Dendritic cell treated with granulocyte-macrophage colony-stimulating factor and Interleukin-4, amounts not matched to agents 40 ng/mL and 50 ng/mL, for 4 days (primary cell): ENCODE measurements at regions of chr13 and their contacts with region 1.

Region 1: GRCh38 chr13:37148501-37148900 is 43.0 kb upstream of the CSNK1A1L start:
- H3K4me3 Mint-ChIP-seq: no peak overlapping the region
- H3K27ac Mint-ChIP-seq: no peak overlapping the region
- H3K4me1 Mint-ChIP-seq: no peaks in the 10 kb centered on the region
- H3K27me3 Mint-ChIP-seq: no peaks in the 10 kb centered on the region

Region 2: DNA sequence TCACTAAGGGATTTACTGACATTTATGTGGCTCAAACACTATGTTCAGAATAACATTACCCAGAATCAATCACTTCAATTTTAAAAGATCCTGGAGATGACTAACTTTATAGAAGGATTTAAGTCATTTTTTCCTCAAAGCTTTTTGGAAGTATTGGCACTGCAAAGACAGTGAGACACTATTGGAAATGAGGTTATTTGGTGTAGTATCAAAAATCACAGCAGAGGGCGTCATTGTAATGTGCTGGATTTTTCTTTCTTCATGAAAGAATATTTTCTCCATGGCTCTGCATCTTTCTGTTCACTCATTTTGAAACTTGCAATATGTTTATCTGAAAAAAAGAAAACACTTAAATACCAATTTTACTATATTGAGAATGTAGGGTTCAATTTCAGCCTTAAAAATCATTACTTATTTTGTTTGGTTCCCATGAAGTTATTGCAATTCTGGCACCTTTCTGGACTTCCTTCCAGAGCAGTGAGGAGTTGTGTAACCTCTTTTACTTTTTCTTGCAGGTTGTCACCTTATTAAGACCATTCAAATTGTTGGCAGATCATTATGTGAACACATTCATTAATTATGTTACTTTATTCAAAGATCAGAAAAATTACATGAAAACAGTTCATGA is 39.3 kb before region 1 on chr13:
- intact Hi-C with region 1: no loop called
- H3K4me3 Mint-ChIP-seq: no peak overlapping the region
- H3K27ac Mint-ChIP-seq: no peak overlapping the region
- H3K4me1 Mint-ChIP-seq: no peaks in the 10 kb centered on the region
- H3K27me3 Mint-ChIP-seq: peaks cover 6% of the 10 kb centered on the region

Region 3: GRCh38 chr13:37163641-37164265 is 15.3 kb after region 1 on chr13:
- intact Hi-C with region 1: loop called (anchors 1 kb)
- H3K4me3 Mint-ChIP-seq: no peak overlapping the region
- H3K27ac Mint-ChIP-seq: no peak overlapping the region
- H3K4me1 Mint-ChIP-seq: no peaks in the 10 kb centered on the region
- H3K27me3 Mint-ChIP-seq: no peaks in the 10 kb centered on the region